ENCODE measurements at regions of chrX and their contacts with region 1.

Region 1: GRCh38 chrX:15645258-15645657 is 19.3 kb downstream of the CLTRN start:
- DNase-seq: no peak
- H3K4me3 ChIP-seq: no peak overlapping the region
- H3K27ac ChIP-seq: no peak overlapping the region
- H3K4me1 ChIP-seq: no peaks in the 10 kb centered on the region
- H3K27me3 ChIP-seq: peaks cover 19% of the 10 kb centered on the region
- CTCF ChIP-seq: no peak

Region 2: DNA sequence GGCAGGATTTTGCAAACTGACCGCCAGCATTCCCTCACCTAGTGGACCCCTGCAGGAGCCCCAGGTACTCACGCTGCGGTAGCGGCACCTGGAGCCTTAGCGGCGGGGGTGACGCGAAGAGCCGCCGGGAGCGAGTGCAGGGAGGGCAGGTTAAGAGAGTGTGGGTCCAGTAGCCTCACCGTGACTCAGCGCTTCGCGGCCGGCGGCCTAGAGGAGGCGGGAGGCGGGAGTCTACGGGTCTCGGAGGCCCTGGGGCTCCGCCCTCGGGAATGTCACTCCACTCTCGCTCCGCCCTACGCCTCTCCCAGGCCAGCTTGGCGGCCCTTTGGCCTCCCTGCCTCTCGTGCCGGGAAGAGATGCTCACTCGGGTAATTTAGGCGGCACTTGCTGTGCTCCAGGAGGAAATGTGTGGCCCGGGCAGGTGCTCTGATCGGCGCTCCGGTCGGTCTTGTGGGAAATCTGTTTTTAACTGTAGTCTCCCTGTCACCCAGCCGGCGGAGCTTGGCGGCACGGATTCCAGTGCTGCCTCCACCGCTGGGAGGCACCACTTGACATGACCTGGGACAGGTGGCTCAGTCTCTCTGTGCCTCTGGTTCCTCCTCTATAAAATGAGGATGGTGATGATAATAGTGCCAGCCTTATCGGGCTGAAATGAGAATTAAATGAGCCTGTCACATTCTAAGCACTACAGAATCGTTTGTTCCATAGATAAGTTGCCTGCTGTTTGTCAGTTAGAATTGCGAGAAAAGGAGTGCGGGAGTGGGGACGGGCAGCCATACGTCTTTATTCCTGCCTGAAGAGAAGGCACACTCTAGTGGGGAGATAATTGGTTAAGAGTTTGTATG is 151.9 kb before region 1 on chrX and contains the start of gene PIR:
- CTCF ChIA-PET with region 1: no interaction called
- POLR2A ChIA-PET with region 1: no interaction called
- intact Hi-C with region 1: loop called (anchors 10 kb)
- DNase-seq: peak; percentile 88
- H3K4me3 ChIP-seq: peak within 1 kb of the TSS; percentile 52
- H3K27ac ChIP-seq: peak within 1 kb of the TSS; percentile 78
- H3K4me1 ChIP-seq: no peaks in the 10 kb centered on the region
- H3K27me3 ChIP-seq: no peaks in the 10 kb centered on the region
- CTCF ChIP-seq: peak; percentile 70
- total RNA-seq, gene PIR: 58.0 and 74.2 TPM in 2 replicates

Region 3: DNA sequence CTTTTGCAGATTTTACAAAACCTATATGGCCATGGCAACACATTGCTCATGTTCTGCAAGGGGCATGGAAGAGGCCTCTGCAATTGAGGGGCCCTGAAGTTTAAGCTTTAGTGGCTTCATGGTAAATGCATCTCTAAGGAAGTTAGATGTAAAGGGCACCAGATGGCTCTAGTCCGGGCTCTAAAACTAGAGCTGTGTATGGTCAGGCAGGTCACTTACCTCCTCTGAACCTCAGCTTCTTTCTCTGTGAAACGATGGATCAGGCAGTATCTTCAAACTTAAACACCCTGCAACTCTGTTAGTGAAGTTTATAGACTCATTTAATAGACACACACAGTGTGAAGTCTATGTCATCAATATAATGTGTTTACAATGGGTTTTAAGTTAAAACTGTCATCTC is 532.0 kb after region 1 on chrX:
- CTCF ChIA-PET with region 1: no interaction called
- POLR2A ChIA-PET with region 1: no interaction called
- intact Hi-C with region 1: no loop called
- DNase-seq: no peak
- H3K4me3 ChIP-seq: no peak overlapping the region
- H3K27ac ChIP-seq: no peak overlapping the region
- H3K4me1 ChIP-seq: no peaks in the 10 kb centered on the region
- H3K27me3 ChIP-seq: peaks cover 29% of the 10 kb centered on the region
- CTCF ChIP-seq: no peak

Measured in A673 (cell line).